ENCODE measurements at regions of chr12 and their contacts with region 1.

Region 1: DNA sequence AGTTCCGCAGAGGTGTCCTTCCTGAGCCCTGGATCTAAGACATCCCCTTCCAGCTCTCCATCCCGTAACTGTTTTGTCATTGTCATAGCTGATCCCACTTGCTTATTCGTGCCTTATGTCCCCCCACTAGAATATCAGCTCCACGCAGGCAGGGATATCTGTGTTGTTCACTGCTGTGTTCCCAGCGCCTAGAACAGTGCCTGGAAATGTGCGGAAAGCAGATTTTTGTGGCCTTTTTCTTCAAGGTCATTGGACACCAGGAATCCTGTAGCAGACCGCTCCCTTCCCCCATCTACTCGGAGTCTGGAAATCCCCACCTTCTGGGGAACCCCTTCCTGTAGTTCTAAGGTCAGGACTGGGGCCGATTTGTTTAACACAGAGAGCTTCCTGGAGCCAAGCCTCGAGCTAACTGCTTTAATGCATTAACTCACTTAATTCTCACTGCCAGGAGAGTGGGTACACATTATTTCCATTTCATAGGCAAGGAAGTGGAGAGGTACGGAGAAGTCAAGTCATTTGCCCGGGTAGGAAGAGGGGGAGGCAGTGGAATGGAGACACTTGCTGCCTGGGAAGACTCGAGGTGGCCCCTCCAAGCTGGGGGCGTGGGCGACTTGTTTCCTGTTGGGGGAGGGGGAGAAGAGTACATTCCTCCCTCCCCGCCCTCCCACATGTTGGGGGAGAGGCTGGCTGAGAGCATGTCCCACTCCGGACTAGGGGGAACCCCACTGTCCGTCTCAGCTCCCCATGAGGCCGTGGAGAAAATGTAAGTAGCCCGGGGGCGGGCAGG is 1.2 kb upstream of the SH2B3 start:
- DNase-seq: no peak
- H3K4me3 ChIP-seq: peak overlapping the region; percentile 62 to 88 (median 74)
- H3K27ac ChIP-seq: peak overlapping the region; percentile 81 to 94 (median 90)
- H3K4me1 ChIP-seq: peaks cover 36 to 78% (median 44%) of the 10 kb centered on the region in 3 donors
- H3K27me3 ChIP-seq: peaks cover 0 to 83% (median 0%) of the 10 kb centered on the region in 4 donors
- CTCF ChIP-seq: no peak
- POLR2A ChIP-seq: no peak

Region 2: GRCh38 chr12:111444925-111445725 is 40.6 kb after region 1 on chr12:
- intact Hi-C with region 1: loop called (anchors 5 kb)
- DNase-seq: peak; percentile 39
- H3K4me3 ChIP-seq: no peak overlapping the region
- H3K27ac ChIP-seq: peak overlapping the region; percentile 5 to 74 (median 68)
- H3K4me1 ChIP-seq: peaks cover 15 to 92% (median 55%) of the 10 kb centered on the region in 3 donors
- H3K27me3 ChIP-seq: no peaks in the 10 kb centered on the region
- CTCF ChIP-seq: peak in 2 of 6 experiments; percentile 8 to 11
- POLR2A ChIP-seq: no peak

Measured in esophagus squamous epithelium (tissue), 5 donors.